Ascending aorta (tissue), 2 donors: ENCODE measurements at regions of chr1 and their contacts with region 1.

Region 1: GRCh38 chr1:211514030-211514754 is 22.2 kb upstream of the RD3 start:
- DNase-seq: peak; percentile 40 to 92
- H3K4me3 ChIP-seq: no peak overlapping the region
- H3K27ac ChIP-seq: peak overlapping the region in 1 of 2 donors; percentile 66
- H3K4me1 ChIP-seq: peaks cover 3 to 15% of the 10 kb centered on the region in 2 donors
- H3K27me3 ChIP-seq: no peaks in the 10 kb centered on the region
- CTCF ChIP-seq: peak; percentile 71 to 88 (median 87)

Region 2: DNA sequence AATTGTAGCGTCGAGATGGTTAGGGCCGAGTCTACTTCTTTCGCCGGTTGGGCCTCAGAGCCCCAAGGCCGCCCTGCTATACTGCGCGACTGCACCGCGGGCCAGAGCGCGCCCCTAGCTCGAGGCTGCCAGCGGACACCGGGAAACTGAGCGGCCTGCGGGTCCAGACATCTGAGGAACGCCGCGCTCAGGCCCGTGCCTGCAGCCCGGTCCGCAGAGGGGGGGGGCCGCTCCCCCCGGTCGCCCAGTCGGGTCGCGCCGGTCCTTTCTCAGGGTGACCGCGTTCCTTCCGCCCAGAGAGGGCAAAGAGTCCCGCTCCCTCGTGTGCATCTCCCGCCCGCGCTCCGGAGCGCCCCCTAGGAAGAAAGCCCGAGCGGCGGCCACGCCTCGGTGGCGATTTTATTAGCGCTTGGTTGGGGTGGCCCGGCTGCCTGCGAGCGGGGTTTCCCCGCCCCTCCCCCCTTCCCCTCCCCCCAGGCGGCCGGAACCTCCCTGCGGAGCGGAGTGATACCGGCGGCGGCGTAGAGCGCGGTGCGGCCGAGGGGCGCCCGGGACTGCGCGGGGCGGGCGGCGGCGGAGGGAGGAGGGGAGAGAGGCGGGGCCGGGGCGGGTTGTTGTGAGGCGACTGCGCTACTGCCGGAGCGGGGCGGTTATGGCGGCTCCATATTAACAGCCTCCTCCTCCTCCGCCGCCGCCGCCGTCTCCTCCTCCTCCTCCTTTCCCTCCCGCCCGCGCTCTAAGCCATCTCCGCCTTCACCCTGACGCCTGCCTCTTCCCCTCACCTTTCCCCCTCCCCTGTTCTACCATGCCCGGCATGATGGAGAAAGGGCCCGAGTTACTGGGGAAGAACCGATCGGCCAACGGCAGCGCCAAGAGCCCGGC is 255.2 kb before region 1 on chr1 and contains the start of gene RCOR3:
- intact Hi-C with region 1: loop called (anchors 2 kb)
- DNase-seq: peak; percentile 66 to 96
- H3K4me3 ChIP-seq: peak within 1 kb of the TSS; percentile 94 to 99
- H3K27ac ChIP-seq: peak within 1 kb of the TSS; percentile 97 to 100
- H3K4me1 ChIP-seq: peaks cover 0 to 21% of the 10 kb centered on the region in 2 donors
- H3K27me3 ChIP-seq: no peaks in the 10 kb centered on the region
- CTCF ChIP-seq: peak in 2 of 3 experiments; percentile 46 to 47
- total RNA-seq, gene RCOR3: 10.3 TPM

Region 3: GRCh38 chr1:211382714-211383480 is 131.3 kb before region 1 on chr1:
- intact Hi-C with region 1: loop called (anchors 1 kb)
- DNase-seq: peak; percentile 59 to 96
- H3K4me3 ChIP-seq: peak overlapping the region; percentile 71 to 96
- H3K27ac ChIP-seq: peak overlapping the region; percentile 93 to 100
- H3K4me1 ChIP-seq: no peaks in the 10 kb centered on the region
- H3K27me3 ChIP-seq: no peaks in the 10 kb centered on the region
- CTCF ChIP-seq: peak in 1 of 3 experiments; percentile 3

Region 4: GRCh38 chr1:211551628-211552460 is 37.7 kb after region 1 on chr1:
- intact Hi-C with region 1: loop called (anchors 1 kb)
- DNase-seq: peak in 1 of 2 donors; percentile 68
- H3K4me3 ChIP-seq: peak overlapping the region in 1 of 2 donors; percentile 27
- H3K27ac ChIP-seq: peak overlapping the region; percentile 58 to 62
- H3K4me1 ChIP-seq: peaks cover 0 to 24% of the 10 kb centered on the region in 2 donors
- H3K27me3 ChIP-seq: no peaks in the 10 kb centered on the region
- CTCF ChIP-seq: no peak

Region 5: GRCh38 chr1:212284744-212285684 is 770.8 kb after region 1 on chr1 and contains the start of gene PPP2R5A:
- intact Hi-C with region 1: loop called (anchors 10 kb)
- DNase-seq: peak; percentile 98 to 100
- H3K4me3 ChIP-seq: peak within 1 kb of the TSS; percentile 74 to 88
- H3K27ac ChIP-seq: peak within 1 kb of the TSS; percentile 97 to 99
- H3K4me1 ChIP-seq: peaks cover 3 to 20% of the 10 kb centered on the region in 2 donors
- H3K27me3 ChIP-seq: no peaks in the 10 kb centered on the region
- CTCF ChIP-seq: peak; percentile 8 to 23 (median 11)
- total RNA-seq, gene PPP2R5A: 64.7 TPM